Panc1 (cell line): ENCODE measurements at regions of chr3 and their contacts with region 1.

Region 1: GRCh38 chr3:43330981-43331380 is 44.6 kb downstream of the SNRK start:
- DNase-seq: no peak
- ATAC-seq: no peak
- H3K4me3 ChIP-seq: no peak overlapping the region
- H3K27ac ChIP-seq: no peak overlapping the region
- H3K4me1 ChIP-seq: no peaks in the 10 kb centered on the region
- H3K27me3 ChIP-seq: no peaks in the 10 kb centered on the region
- CTCF ChIP-seq: no peak

Region 2: GRCh38 chr3:43190666-43191065 is 140.3 kb before region 1 on chr3:
- CTCF ChIA-PET with region 1: no interaction called
- POLR2A ChIA-PET with region 1: no interaction called
- in situ Hi-C with region 1: no loop called
- intact Hi-C with region 1: no loop called
- DNase-seq: no peak
- ATAC-seq: no peak
- H3K4me3 ChIP-seq: no peak overlapping the region
- H3K27ac ChIP-seq: no peak overlapping the region
- H3K4me1 ChIP-seq: no peaks in the 10 kb centered on the region
- H3K27me3 ChIP-seq: no peaks in the 10 kb centered on the region
- CTCF ChIP-seq: no peak

Region 3: GRCh38 chr3:43317461-43318316 is 13.3 kb before region 1 on chr3:
- CTCF ChIA-PET with region 1: interaction called, 11 read pairs
- POLR2A ChIA-PET with region 1: no interaction called
- in situ Hi-C with region 1: no loop called
- intact Hi-C with region 1: no loop called
- DNase-seq: no peak
- ATAC-seq: no peak
- H3K4me3 ChIP-seq: no peak overlapping the region
- H3K27ac ChIP-seq: no peak overlapping the region
- H3K4me1 ChIP-seq: no peaks in the 10 kb centered on the region
- H3K27me3 ChIP-seq: no peaks in the 10 kb centered on the region
- CTCF ChIP-seq: no peak

Region 4: DNA sequence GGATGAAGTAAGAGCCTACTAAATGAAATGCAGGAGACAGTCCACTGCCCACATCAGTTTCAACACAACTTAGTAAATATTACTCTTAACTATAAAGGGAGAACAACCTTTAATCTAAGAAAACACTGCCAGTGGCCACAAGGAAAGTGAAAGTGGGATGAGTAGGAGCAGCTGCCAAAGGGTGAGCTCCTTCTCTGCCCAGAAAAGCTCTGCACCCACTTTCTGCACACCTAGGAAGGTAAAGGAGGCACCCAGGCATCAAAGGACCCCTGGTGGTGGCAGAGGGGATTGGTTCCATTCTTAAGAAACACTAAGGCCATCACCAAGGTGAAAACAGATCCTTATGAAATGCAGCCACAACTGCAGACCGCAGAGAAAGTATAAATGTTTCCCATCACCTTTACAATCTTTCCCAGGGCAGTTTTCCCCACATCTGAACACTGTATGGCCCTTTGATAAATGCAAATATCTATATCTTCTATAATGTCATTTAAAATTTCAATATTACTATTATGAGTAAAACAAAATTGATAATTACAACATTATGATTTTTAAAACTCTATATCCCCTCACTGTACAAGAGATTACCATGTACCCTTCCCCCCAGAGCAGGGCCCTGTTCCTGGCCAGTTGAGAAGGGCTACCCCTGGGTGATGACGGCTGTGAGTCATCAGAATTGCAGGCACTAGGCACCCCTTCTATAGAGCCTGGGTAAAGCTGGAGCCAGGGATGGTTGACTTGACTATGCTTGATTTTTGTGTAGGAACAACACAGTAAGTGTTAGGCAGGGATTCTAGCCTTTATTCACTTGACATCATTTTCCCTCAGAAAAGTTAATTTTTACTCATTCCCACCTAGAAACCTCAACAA is 47.3 kb after region 1 on chr3:
- CTCF ChIA-PET with region 1: no interaction called
- POLR2A ChIA-PET with region 1: no interaction called
- in situ Hi-C with region 1: no loop called
- intact Hi-C with region 1: no loop called
- DNase-seq: no peak
- ATAC-seq: no peak
- H3K4me3 ChIP-seq: no peak overlapping the region
- H3K27ac ChIP-seq: no peak overlapping the region
- H3K4me1 ChIP-seq: no peaks in the 10 kb centered on the region
- H3K27me3 ChIP-seq: no peaks in the 10 kb centered on the region
- CTCF ChIP-seq: peak; percentile 69